KBM-7 (cell line): ENCODE measurements at regions of chr3 and their contacts with region 1.

Region 1: GRCh38 chr3:184110316-184110725 is 13.5 kb downstream of the HTR3E start:
- DNase-seq: peak; percentile 14

Region 2: DNA sequence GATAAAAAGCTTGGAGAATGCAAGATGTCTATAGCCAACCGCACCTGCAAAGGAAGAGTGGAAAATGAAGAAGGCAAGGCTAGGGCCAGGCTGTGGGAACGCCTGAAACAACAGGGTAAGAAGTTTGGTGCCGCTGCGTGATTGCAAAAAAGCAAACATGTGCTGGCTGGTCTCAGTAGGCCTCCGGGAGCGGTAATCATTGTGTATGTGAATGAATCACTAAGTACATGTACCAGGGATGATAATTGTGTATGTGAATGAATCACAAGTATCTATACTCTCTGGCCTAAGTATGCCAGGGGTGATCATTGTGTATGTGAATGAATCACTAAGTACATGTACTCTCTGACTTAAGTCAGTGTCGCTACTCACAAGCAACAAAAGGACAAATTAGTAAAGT is 185.4 kb before region 1 on chr3:
- in situ Hi-C with region 1: loop called (anchors 25 kb)
- DNase-seq: no peak

Region 3: GRCh38 chr3:184275961-184276910 is 165.9 kb after region 1 on chr3 and contains the start of gene ECE2:
- in situ Hi-C with region 1: no loop called
- DNase-seq: no peak